ENCODE measurements at regions of chr22 and their contacts with region 1.

Region 1: DNA sequence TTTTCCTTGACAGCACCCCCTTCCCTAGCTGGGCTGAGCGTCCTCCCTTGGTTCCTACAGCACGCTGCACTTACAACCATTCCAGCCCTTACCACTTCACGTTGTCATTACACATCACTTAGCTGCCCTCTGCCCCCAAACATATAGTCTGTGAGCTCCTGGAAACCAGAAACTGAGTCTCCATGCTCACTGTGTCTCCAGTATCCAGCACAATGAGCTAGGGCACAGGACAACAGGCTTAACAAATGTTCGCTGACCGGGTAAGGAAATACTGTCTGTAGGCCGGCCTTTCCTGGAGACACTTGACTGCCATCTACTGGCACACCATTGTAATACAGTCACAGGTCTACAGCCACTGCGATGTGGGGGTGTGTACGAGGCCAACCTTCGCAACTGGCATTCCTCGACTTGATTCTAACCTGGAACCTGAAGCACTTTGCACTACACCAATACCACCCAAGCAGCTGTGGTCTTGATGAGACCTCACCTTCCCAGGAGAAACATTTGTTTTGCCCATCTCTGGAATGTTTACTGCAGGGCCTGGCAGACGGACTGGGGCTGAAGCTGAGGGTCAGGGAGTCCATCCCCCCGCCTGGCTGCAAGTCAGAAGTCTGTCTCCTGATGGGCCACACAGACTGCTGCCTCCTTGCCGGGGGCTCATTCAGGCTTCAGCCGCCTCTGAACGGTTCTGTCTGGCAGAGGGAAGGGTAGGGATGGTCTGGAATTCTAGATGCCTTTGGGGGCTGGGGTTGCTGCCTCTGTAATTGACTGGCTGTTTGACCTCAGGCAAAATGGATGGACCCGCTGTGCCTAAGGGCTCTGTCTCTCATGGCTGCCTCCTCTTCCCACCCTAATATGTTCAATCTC is 72.0 kb downstream of the SYN3 start:
- DNase-seq: peak; percentile 77
- H3K4me3 ChIP-seq: no peak overlapping the region; a peak in 1 of 4 replicates
- H3K27ac ChIP-seq: peak overlapping the region in 1 of 2 experiments; percentile 71; a peak in 2 of 4 replicates
- H3K4me1 ChIP-seq: peaks cover 0 to 23% of the 10 kb centered on the region in 2 experiments; a peak in 1 of 4 replicates
- H3K27me3 ChIP-seq: no peaks in the 10 kb centered on the region
- CTCF ChIP-seq: peak; percentile 72
- EP300 ChIP-seq: no peak
- RAD21 ChIP-seq: peak; percentile 96

Region 2: GRCh38 chr22:32660292-32660691 is 325.8 kb before region 1 on chr22:
- CTCF ChIA-PET with region 1: interaction called, 78 read pairs
- POLR2A ChIA-PET with region 1: interaction called, 5 read pairs
- DNase-seq: peak; percentile 81
- H3K4me3 ChIP-seq: no peak overlapping the region
- H3K27ac ChIP-seq: no peak overlapping the region; a peak in 1 of 4 replicates
- H3K4me1 ChIP-seq: peaks cover 4 to 8% of the 10 kb centered on the region in 2 experiments; a peak in 1 of 4 replicates
- H3K27me3 ChIP-seq: no peaks in the 10 kb centered on the region
- CTCF ChIP-seq: peak; percentile 70
- EP300 ChIP-seq: no peak
- RAD21 ChIP-seq: peak; percentile 84

Region 3: DNA sequence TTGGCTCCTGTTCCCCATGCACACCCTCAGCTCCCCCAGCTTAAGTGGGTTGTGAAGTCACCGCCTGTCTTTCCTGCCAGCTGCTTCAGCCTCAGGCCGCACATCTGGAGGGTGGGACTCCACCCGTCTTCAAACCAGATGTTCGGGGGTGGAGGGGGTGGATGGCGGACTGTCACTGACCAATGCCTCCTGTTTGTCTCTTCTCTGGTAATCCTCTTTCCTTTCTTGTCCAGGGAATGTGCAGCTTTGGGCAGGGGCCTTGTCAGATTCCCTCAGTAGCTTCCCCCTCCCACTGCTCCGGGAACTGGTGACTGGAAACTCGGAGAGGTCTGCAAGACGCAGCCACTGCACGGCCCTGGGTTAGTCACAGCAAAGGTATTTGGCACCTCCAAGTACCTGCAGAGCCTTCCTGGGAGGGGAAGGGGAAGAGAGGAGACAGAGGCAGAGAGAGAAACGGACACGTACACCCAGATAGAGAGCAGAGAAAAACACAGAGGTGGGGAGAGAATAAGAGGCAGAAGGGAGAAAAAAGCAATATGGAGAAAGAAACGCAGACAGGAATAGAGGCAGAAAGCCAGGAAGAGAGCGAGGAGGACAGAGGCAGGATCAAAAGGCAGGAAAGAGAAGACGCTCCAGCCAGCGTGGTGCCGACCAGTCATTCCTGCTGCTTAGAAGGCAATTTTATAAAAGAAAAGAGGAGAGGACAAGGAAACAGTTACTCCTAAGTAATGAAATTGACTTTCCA is 240.7 kb before region 1 on chr22:
- CTCF ChIA-PET with region 1: no interaction called
- POLR2A ChIA-PET with region 1: no interaction called
- DNase-seq: peak; percentile 78
- H3K4me3 ChIP-seq: no peak overlapping the region
- H3K27ac ChIP-seq: no peak overlapping the region
- H3K4me1 ChIP-seq: peaks cover 0 to 10% of the 10 kb centered on the region in 2 experiments; a peak in 1 of 4 replicates
- H3K27me3 ChIP-seq: no peaks in the 10 kb centered on the region
- CTCF ChIP-seq: no peak
- EP300 ChIP-seq: no peak
- RAD21 ChIP-seq: no peak

Region 4: DNA sequence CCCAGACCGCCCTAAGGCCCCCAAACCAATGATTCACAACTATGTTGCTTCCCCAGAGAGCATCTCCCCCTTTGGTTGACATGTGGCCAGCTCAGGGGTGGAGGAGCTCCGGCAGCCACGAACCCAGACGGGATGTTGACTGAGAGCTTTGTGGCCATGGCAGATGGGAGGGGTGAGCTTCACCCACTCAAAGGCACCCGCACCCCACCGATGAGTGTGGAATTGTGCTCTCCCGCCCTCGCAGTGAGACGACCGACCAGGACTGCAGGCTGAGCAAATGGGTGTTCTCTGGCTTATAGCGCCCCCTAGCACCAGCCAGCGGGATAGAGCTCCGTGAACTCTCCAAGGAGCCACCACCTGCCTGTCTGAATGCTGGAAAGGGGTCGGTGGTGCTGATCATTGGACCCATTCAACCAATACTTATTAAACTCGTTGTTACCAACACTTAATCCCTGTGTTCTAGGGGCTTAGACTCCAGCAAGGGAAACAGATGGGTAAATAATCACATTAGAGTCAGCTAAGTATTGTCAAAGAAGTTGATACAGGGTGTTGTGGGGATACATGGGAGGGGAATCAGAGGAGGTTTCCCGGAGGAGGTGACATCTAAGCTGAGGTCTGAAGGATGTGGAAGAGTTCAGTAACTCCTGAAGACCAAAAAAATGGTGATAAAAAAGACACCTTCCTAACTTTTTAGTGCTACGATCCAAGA is 189.1 kb before region 1 on chr22:
- CTCF ChIA-PET with region 1: interaction called, 92 read pairs
- POLR2A ChIA-PET with region 1: no interaction called
- DNase-seq: peak; percentile 76
- H3K4me3 ChIP-seq: peak overlapping the region in 1 of 2 experiments; percentile 11; a peak in 1 of 4 replicates
- H3K27ac ChIP-seq: no peak overlapping the region
- H3K4me1 ChIP-seq: peaks cover 0 to 8% of the 10 kb centered on the region in 2 experiments; a peak in 1 of 4 replicates
- H3K27me3 ChIP-seq: no peaks in the 10 kb centered on the region
- CTCF ChIP-seq: peak; percentile 87
- EP300 ChIP-seq: no peak
- RAD21 ChIP-seq: peak; percentile 79

Region 5: GRCh38 chr22:32850591-32851517 is 135.3 kb before region 1 on chr22:
- CTCF ChIA-PET with region 1: interaction called, 16 read pairs
- POLR2A ChIA-PET with region 1: no interaction called
- DNase-seq: no peak
- H3K4me3 ChIP-seq: no peak overlapping the region
- H3K27ac ChIP-seq: no peak overlapping the region
- H3K4me1 ChIP-seq: peaks cover 0 to 26% of the 10 kb centered on the region in 2 experiments; a peak in 2 of 4 replicates
- H3K27me3 ChIP-seq: no peaks in the 10 kb centered on the region
- CTCF ChIP-seq: no peak
- EP300 ChIP-seq: no peak
- RAD21 ChIP-seq: no peak

Region 6: GRCh38 chr22:32880893-32881596 is 105.1 kb before region 1 on chr22:
- CTCF ChIA-PET with region 1: interaction called, 34 read pairs
- POLR2A ChIA-PET with region 1: interaction called, 4 read pairs
- DNase-seq: peak; percentile 89
- H3K4me3 ChIP-seq: no peak overlapping the region
- H3K27ac ChIP-seq: peak overlapping the region in 1 of 2 experiments; percentile 99; a peak in 2 of 4 replicates
- H3K4me1 ChIP-seq: peaks cover 0 to 42% of the 10 kb centered on the region in 2 experiments; a peak in 2 of 4 replicates
- H3K27me3 ChIP-seq: no peaks in the 10 kb centered on the region
- CTCF ChIP-seq: no peak
- EP300 ChIP-seq: peak in 1 of 2 experiments; percentile 94; a peak in 3 of 4 replicates
- RAD21 ChIP-seq: peak; percentile 32; the same call in 1 of the 2 replicates

Region 7: DNA sequence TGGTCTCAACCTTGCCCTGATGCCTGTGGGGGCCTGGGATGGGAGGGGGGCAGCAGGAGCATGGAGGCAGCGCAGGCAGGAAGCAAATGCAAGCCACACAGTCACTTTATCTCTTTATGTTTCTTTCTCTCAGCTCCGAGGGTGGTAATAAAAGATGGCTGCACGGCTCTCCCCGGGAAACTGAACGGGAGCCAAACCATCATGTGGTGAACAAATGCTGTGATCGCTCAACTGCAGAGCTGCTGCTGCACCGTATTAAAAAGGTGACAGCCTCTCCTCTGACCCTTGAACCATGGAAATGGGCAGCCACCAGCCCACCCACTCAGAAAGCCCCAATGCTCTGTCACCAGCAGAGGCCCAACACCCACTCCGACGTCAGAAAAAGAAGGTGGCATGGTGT is 74.6 kb before region 1 on chr22:
- CTCF ChIA-PET with region 1: interaction called, 10 read pairs
- POLR2A ChIA-PET with region 1: no interaction called
- DNase-seq: no peak
- H3K4me3 ChIP-seq: no peak overlapping the region
- H3K27ac ChIP-seq: no peak overlapping the region; a peak in 1 of 4 replicates
- H3K4me1 ChIP-seq: peaks cover 0 to 8% of the 10 kb centered on the region in 2 experiments; a peak in 1 of 4 replicates
- H3K27me3 ChIP-seq: no peaks in the 10 kb centered on the region
- CTCF ChIP-seq: no peak
- EP300 ChIP-seq: no peak
- RAD21 ChIP-seq: no peak

Region 8: DNA sequence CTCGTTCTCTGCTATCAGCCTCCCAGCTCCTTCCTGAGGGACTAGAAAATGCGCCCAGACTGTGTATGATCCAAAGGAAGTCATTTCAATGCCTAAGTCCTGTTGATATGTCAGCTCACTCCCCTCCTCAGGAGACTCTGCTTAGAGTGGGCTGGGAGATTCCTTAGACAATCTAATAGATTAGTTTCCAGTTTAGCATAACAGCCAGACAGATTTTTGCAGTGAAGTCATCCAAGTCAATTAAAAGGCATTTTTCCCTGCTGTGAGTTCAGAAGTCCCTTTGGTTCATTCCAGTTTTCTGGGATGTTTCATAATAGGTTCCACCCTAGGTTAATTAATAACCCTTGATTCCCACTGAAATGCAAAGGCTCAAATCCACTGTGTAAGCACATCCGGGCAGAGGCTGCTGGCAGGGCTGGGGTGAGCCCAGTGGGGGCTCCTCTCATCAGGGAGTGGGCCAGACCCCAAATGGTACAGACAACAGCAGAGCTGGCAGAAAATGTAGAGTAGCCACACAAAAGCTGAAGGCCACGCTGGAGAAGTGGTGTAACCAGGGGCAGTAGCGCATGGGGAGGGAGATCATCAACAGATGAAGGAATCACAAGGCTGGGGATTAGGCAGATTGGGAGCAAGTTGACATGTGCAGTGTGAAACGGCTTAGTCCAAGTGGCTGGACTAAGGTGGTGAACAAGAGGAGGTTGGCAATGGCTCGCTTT is 18.6 kb before region 1 on chr22:
- CTCF ChIA-PET with region 1: interaction called, 11 read pairs
- POLR2A ChIA-PET with region 1: no interaction called
- DNase-seq: no peak
- H3K4me3 ChIP-seq: no peak overlapping the region
- H3K27ac ChIP-seq: no peak overlapping the region
- H3K4me1 ChIP-seq: peaks cover 0 to 3% of the 10 kb centered on the region in 2 experiments; a peak in 1 of 4 replicates
- H3K27me3 ChIP-seq: no peaks in the 10 kb centered on the region
- CTCF ChIP-seq: no peak
- EP300 ChIP-seq: no peak
- RAD21 ChIP-seq: no peak